ENCODE measurements at regions of chr3 and their contacts with region 1.

Region 1: GRCh38 chr3:88058591-88059368 is at the starts of genes CGGBP1 and ZNF654:
- H3K4me3 Mint-ChIP-seq: peak within 1 kb of the TSS; percentile 96
- H3K27ac Mint-ChIP-seq: peak within 1 kb of the TSS; percentile 92
- H3K4me1 Mint-ChIP-seq: peaks cover 36% of the 10 kb centered on the region
- H3K27me3 Mint-ChIP-seq: no peaks in the 10 kb centered on the region

Region 2: GRCh38 chr3:87227104-87227834 is 831.5 kb before region 1 on chr3 and contains the start of gene CHMP2B:
- intact Hi-C with region 1: loop called (anchors 5 kb)
- H3K4me3 Mint-ChIP-seq: peak within 1 kb of the TSS; percentile 97
- H3K27ac Mint-ChIP-seq: peak within 1 kb of the TSS; percentile 99
- H3K4me1 Mint-ChIP-seq: peaks cover 32% of the 10 kb centered on the region
- H3K27me3 Mint-ChIP-seq: peaks cover 4% of the 10 kb centered on the region

Region 3: DNA sequence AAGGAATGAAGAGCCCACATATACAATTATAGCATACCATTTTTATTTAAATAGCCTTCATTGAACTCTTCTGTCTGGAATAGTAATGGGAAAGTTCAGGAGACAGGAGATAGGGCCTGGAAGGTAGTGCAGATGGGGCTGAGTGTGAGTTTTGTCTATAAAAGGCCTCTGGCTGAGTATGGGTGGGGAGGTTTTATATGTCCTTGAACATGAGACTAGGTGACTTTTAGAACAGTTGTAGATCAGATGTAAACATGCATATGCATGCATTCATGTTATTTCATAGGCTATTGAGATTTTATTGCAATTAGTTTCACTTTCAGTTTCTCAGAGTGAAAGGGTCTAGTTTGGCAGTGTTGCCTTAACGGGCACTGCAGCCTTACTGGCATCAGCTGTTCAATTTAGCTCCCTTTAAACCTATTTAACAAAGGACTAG is 27.1 kb before region 1 on chr3:
- intact Hi-C with region 1: loop called (anchors 2 kb)
- H3K4me3 Mint-ChIP-seq: peak overlapping the region; percentile 72
- H3K27ac Mint-ChIP-seq: peak overlapping the region; percentile 79
- H3K4me1 Mint-ChIP-seq: peaks cover 22% of the 10 kb centered on the region
- H3K27me3 Mint-ChIP-seq: no peaks in the 10 kb centered on the region

Region 4: DNA sequence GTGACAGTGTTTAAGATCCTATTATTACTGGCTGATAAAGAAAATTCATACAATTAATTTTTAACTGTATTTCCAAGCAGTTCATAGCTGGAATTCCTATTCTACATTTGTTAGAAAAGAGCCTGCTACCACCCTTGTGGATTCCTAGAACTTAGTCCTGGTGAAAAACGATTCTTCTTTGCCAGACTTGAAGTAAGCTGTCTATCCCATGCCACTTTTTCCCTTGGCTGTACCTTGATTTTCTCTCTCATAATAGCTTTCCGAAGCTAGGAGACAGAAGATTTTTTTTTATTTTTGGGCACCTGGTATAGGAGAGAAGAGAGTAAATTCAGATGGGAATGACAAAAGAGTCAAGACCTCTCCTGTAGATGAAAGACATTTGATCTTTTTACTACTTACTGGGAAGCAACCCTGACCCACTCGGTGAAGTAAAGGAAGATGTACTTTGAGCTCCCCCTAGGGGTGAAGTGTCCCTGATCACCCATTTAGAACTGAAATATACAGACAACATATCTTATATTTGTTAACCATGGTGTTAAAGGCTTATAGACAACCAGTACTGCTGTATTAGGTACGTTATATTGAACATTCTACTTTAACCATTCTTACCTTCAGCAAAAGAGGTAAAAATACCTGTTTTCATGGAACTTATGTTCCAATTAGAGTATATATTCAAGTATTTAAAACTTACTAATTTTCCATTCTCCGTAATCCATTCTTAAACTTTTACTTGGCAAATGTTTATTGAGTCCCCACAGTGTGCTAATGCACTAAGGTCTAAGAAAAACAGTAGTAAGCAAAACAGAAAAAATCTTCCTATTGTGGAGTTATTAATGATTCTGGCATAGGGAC is 54.8 kb after region 1 on chr3:
- intact Hi-C with region 1: loop called (anchors 2 kb)
- H3K4me3 Mint-ChIP-seq: no peak overlapping the region
- H3K27ac Mint-ChIP-seq: no peak overlapping the region
- H3K4me1 Mint-ChIP-seq: peaks cover 5% of the 10 kb centered on the region
- H3K27me3 Mint-ChIP-seq: no peaks in the 10 kb centered on the region

Region 5: GRCh38 chr3:88149509-88150362 is 91.0 kb after region 1 on chr3 and contains the start of gene C3orf38:
- intact Hi-C with region 1: loop called (anchors 1 kb)
- H3K4me3 Mint-ChIP-seq: peak within 1 kb of the TSS; percentile 95
- H3K27ac Mint-ChIP-seq: peak within 1 kb of the TSS; percentile 98
- H3K4me1 Mint-ChIP-seq: peaks cover 32% of the 10 kb centered on the region
- H3K27me3 Mint-ChIP-seq: no peaks in the 10 kb centered on the region